ENCODE measurements at regions of chr19 and their contacts with region 1.

Region 1: DNA sequence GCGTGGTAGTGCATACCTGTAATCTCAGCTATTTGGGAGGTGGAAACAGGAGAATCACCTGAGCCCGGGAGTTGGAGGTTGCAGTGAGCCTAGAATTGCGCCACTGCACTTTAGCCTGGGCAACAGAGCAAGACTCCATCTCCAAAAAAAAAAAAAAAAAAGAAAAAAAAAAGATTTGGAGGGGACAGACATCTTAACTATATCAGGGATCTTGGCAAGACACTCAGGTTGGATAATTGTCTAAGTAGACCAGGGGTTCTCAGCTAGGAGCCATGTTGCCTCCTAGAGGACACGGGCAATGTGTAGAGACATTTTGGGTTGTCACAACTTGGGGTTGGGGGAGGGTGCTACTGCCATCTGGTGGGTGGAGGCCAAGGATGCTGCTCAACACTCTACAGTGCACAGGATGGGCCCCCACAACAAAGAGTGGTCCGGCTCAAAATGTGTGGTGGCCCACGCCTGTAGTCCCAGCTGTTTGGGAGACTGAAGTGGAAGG is 1.9 kb upstream of the ZNF580 start:
- DNase-seq: peak; percentile 87
- H3K4me3 ChIP-seq: no peak overlapping the region
- H3K27ac ChIP-seq: no peak overlapping the region
- H3K4me1 ChIP-seq: peaks cover 26% of the 10 kb centered on the region
- H3K27me3 ChIP-seq: no peaks in the 10 kb centered on the region
- CTCF ChIP-seq: peak; percentile 67

Region 2: GRCh38 chr19:55339048-55339888 is 299.6 kb before region 1 on chr19 and contains the start of gene KMT5C:
- CTCF ChIA-PET with region 1: interaction called, 10 read pairs
- POLR2A ChIA-PET with region 1: no interaction called
- intact Hi-C with region 1: no loop called
- DNase-seq: peak; percentile 100
- H3K4me3 ChIP-seq: peak within 1 kb of the TSS; percentile 74
- H3K27ac ChIP-seq: peak within 1 kb of the TSS; percentile 90
- H3K4me1 ChIP-seq: peaks cover 8% of the 10 kb centered on the region
- H3K27me3 ChIP-seq: no peaks in the 10 kb centered on the region
- CTCF ChIP-seq: no peak
- total RNA-seq, gene KMT5C: 19.7 and 24.1 TPM in 2 replicates

Region 3: DNA sequence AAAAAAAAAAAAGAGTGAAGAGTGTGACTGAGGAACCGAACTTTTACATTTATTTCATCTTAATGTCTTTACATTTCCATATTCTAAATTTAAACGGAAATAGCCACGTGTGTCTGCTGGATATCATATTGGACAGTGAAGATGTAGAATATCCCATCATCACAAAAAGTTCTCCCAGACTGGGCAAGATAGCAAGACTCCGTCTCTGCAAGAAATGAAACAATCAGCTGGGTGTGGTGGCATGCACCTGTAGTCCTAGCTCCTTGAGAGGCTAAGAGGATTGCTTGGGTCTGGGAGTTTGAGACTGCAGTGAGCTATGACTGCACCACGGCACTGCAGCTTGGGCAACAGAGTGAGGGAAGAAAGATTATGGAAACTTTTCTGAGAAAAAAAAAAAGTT is 62.2 kb before region 1 on chr19:
- CTCF ChIA-PET with region 1: no interaction called
- POLR2A ChIA-PET with region 1: interaction called, 13 read pairs
- intact Hi-C with region 1: no loop called
- DNase-seq: no peak
- H3K4me3 ChIP-seq: no peak overlapping the region
- H3K27ac ChIP-seq: no peak overlapping the region
- H3K4me1 ChIP-seq: no peaks in the 10 kb centered on the region
- H3K27me3 ChIP-seq: no peaks in the 10 kb centered on the region
- CTCF ChIP-seq: no peak

Region 4: DNA sequence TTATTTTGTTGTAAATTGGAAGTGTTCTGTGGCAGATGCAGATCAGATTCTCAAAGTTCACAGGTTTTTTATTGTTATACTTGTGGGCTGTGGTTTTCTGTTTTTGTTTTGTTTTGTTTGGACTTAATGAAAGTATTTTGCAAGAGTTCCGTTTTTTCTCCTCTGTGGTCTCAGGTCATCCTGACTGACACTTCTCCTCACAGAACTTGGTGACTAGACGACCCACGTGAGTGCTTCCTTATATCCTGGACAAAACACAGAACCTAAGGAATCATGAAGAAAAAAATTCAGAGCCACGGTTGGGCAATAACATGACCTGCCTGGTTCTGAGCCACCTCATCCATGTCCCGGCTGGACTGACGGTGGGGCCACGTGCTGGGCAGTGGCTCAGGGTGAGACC is 127.6 kb after region 1 on chr19:
- CTCF ChIA-PET with region 1: no interaction called
- POLR2A ChIA-PET with region 1: no interaction called
- intact Hi-C with region 1: no loop called
- DNase-seq: no peak
- H3K4me3 ChIP-seq: no peak overlapping the region
- H3K27ac ChIP-seq: no peak overlapping the region
- H3K4me1 ChIP-seq: no peaks in the 10 kb centered on the region
- H3K27me3 ChIP-seq: peaks cover 49% of the 10 kb centered on the region
- CTCF ChIP-seq: no peak